Endothelial cell of umbilical vein (primary cell): ENCODE measurements at regions of chr3 and their contacts with region 1.

Region 1: GRCh38 chr3:170802164-170803151 is 67.5 kb downstream of the RPL22L1 start:
- DNase-seq: peak; percentile 92
- H3K4me3 ChIP-seq: no peak overlapping the region
- H3K27ac ChIP-seq: peak overlapping the region; percentile 76
- H3K4me1 ChIP-seq: peaks cover 36% of the 10 kb centered on the region
- H3K27me3 ChIP-seq: no peaks in the 10 kb centered on the region
- CTCF ChIP-seq: no peak
- POLR2A ChIP-seq: peak; percentile 28

Region 2: DNA sequence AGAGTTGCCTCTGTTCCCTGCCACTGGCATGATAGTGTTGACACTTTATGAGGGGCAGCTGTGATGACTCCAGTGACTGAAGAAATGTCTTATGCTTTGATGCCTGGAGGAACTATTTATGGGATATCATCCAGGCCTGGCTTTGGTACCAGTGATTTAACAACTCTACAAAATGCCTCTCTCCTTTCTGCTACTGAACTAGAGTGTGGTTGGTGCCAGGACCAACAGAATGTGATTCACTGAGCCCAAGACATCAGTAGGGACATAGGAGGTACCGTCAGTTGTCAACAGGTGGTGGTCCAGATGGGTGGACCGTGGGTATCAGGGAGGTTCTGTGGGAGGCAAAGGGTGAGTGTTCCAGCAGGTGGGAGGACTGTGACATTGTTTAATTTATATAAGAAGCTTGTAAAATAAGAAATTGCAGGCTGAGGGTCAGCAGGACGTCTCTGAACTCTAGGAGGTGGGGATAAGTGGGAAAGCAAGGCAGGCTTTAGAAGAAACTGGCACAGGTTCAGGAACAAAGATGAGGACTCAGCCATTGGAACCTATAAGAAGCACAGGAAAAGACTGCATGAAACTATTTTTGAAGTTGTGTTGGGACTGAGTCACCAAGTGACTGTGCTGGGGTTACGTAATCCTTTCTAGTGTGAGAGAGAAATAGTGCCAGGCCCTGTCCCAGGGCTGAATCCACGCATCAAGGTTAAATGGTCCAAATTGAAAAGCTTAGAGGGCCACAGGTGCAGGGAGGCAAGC is 188.1 kb before region 1 on chr3:
- CTCF ChIA-PET with region 1: no interaction called
- POLR2A ChIA-PET with region 1: no interaction called
- dilution Hi-C with region 1: no loop called
- intact Hi-C with region 1: loop called (anchors 5 kb)
- DNase-seq: peak; percentile 83
- H3K4me3 ChIP-seq: no peak overlapping the region
- H3K27ac ChIP-seq: no peak overlapping the region
- H3K4me1 ChIP-seq: peaks cover 7% of the 10 kb centered on the region
- H3K27me3 ChIP-seq: no peaks in the 10 kb centered on the region
- CTCF ChIP-seq: no peak
- POLR2A ChIP-seq: no peak

Region 3: GRCh38 chr3:170641510-170642236 is 160.8 kb before region 1 on chr3:
- CTCF ChIA-PET with region 1: no interaction called
- POLR2A ChIA-PET with region 1: no interaction called
- dilution Hi-C with region 1: no loop called
- intact Hi-C with region 1: no loop called
- DNase-seq: no peak
- H3K4me3 ChIP-seq: no peak overlapping the region
- H3K27ac ChIP-seq: no peak overlapping the region
- H3K4me1 ChIP-seq: no peaks in the 10 kb centered on the region
- H3K27me3 ChIP-seq: no peaks in the 10 kb centered on the region
- CTCF ChIP-seq: no peak
- POLR2A ChIP-seq: no peak

Region 4: DNA sequence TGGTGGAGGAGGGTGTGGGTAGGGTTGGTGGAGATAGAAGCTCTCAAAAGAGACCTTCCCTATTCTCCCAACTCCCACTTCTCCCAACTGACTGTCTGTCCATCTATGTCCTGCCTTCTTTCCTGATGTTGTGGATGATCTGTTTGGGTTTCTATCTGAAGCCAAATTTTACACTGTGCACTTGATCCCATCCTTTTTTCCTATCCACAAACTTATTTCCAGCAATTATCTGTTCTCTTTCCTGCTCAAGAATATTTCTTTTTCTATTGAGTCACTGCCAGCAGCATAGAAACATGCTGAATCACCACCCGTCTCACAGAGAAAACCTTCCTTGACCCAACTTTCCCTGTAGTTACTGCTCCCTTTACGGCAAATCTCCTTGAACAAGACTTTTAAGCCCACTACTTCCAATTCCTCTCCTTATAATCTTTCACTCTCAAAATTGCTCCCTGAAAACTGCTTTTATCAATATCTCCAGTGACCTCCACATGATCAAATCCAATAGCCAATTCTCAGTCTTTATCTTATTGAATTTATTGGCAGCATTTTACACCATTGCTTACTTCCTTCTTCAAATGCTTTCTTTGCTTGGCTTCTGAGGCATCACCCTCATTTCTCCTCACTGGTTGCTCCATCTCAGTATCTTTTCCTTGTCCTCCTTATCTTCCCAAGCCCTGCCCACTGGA is 75.3 kb before region 1 on chr3:
- CTCF ChIA-PET with region 1: no interaction called
- POLR2A ChIA-PET with region 1: no interaction called
- dilution Hi-C with region 1: no loop called
- intact Hi-C with region 1: loop called (anchors 2 kb)
- DNase-seq: peak; percentile 85
- H3K4me3 ChIP-seq: no peak overlapping the region
- H3K27ac ChIP-seq: peak overlapping the region; percentile 89
- H3K4me1 ChIP-seq: peaks cover 22% of the 10 kb centered on the region
- H3K27me3 ChIP-seq: no peaks in the 10 kb centered on the region
- CTCF ChIP-seq: no peak
- POLR2A ChIP-seq: no peak

Region 5: GRCh38 chr3:170745211-170745718 is 57.2 kb before region 1 on chr3:
- CTCF ChIA-PET with region 1: interaction called, 5 read pairs
- POLR2A ChIA-PET with region 1: no interaction called
- dilution Hi-C with region 1: no loop called
- intact Hi-C with region 1: loop called (anchors 1 kb)
- DNase-seq: peak; percentile 89
- H3K4me3 ChIP-seq: no peak overlapping the region
- H3K27ac ChIP-seq: peak overlapping the region; percentile 90
- H3K4me1 ChIP-seq: peaks cover 64% of the 10 kb centered on the region
- H3K27me3 ChIP-seq: no peaks in the 10 kb centered on the region
- CTCF ChIP-seq: no peak
- POLR2A ChIP-seq: peak; percentile 56

Region 6: DNA sequence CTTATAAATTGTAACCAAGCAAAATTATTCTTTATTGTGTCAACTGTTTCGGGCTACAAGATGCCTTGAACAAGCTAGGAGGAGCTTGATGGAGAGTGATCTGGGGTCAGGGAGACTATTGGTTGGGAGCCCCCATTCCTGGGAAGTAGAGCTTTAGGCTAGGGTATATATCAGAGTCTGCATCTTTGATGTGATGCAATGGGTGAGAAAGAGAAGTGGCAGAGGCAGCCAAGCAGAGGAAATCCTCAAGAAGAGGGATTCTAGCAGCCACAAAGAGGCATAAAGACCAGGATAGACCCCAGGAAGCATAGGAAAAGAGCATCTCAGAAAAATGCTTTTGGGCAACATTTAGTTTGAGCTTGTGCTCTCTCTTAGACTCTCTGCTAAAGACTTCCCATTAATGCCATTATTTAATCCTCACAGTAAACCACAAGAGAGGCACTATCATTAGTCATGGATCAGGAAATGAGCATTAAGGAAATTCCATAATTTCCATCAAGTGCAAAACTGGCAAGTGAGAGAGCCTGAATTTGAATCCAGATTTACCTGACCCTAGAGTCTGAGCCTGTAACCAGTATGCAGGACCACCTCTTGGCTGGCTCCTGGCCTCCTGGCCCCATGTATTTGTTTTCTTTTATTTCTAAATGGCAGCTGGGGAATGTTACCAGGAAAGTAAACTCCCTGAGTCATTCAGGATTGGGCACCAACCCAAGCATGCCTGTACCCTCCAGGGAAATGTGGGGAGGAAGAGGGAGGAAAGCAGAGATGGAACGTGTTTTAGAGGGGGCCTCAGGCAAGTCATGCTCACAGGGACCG is 51.2 kb before region 1 on chr3:
- CTCF ChIA-PET with region 1: interaction called, 7 read pairs
- POLR2A ChIA-PET with region 1: interaction called, 9 read pairs
- dilution Hi-C with region 1: no loop called
- intact Hi-C with region 1: loop called (anchors 1 kb)
- DNase-seq: peak; percentile 95
- H3K4me3 ChIP-seq: no peak overlapping the region
- H3K27ac ChIP-seq: peak overlapping the region; percentile 95
- H3K4me1 ChIP-seq: peaks cover 77% of the 10 kb centered on the region
- H3K27me3 ChIP-seq: no peaks in the 10 kb centered on the region
- CTCF ChIP-seq: no peak
- POLR2A ChIP-seq: no peak

Region 7: DNA sequence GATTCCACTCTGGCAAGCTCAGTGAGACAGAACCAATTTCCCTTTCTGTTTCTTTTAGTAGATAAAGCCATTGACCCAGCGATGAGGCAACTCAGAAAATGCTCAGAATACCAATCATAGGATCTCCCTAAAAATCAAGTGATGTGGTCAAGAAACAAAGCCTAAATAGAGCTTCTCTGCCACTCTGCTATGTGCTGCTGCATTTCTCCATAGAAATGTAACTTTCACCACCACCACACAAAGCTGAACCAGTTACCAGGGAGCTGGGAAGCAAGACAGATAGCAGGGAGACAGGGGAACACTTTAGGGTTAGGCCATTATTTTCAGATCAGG is 42.3 kb before region 1 on chr3:
- CTCF ChIA-PET with region 1: interaction called, 11 read pairs
- POLR2A ChIA-PET with region 1: interaction called, 4 read pairs
- dilution Hi-C with region 1: no loop called
- intact Hi-C with region 1: no loop called
- DNase-seq: no peak
- H3K4me3 ChIP-seq: no peak overlapping the region
- H3K27ac ChIP-seq: no peak overlapping the region
- H3K4me1 ChIP-seq: peaks cover 20% of the 10 kb centered on the region
- H3K27me3 ChIP-seq: no peaks in the 10 kb centered on the region
- CTCF ChIP-seq: no peak
- POLR2A ChIP-seq: no peak

Region 8: GRCh38 chr3:170835336-170835735 is 32.9 kb after region 1 on chr3:
- CTCF ChIA-PET with region 1: no interaction called
- POLR2A ChIA-PET with region 1: no interaction called
- dilution Hi-C with region 1: no loop called
- intact Hi-C with region 1: no loop called
- DNase-seq: no peak
- H3K4me3 ChIP-seq: no peak overlapping the region
- H3K27ac ChIP-seq: no peak overlapping the region
- H3K4me1 ChIP-seq: no peaks in the 10 kb centered on the region
- H3K27me3 ChIP-seq: peaks cover 22 to 23% of the 10 kb centered on the region in 2 experiments
- CTCF ChIP-seq: no peak
- POLR2A ChIP-seq: no peak

Region 9: DNA sequence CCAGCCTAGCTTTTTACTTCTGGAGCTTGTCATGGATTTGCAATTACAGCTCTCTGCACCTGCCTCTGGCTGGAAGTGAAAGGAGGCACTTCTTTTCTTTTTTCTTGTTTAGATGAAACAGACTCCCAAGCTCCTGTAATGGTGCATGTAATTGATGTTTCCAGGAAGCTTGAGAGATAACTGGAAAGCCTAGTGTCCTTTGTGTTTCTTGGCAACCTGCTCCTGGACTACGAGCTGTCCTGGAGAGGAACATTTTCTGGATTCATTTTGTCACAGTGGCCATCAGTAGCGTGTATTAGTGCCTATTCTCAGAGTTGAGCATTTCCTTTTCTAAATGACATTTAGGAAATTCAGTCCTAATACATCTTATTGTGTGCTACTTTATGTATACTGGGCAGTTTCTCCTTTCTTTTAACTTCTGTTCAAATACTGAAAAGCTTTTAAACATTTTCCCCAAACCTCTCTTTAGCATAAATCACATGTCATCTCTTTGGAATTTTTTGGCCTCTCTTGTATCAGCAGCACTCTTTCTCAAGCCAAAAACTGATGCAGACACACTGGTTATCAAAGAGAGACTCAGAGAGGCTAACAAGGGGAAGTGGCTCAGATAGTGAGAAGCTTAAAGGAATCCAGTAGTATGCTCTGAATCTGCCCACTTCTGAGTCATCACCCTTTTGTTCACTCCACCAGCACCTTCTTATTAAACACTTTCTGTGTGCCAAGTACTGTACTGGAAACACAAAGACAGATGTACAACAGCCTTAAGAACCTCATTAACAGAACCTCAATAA is 286.7 kb after region 1 on chr3:
- CTCF ChIA-PET with region 1: no interaction called
- POLR2A ChIA-PET with region 1: no interaction called
- dilution Hi-C with region 1: no loop called
- intact Hi-C with region 1: no loop called
- DNase-seq: peak; percentile 77
- H3K4me3 ChIP-seq: no peak overlapping the region
- H3K27ac ChIP-seq: peak overlapping the region; percentile 24
- H3K4me1 ChIP-seq: peaks cover 13% of the 10 kb centered on the region
- H3K27me3 ChIP-seq: no peaks in the 10 kb centered on the region
- CTCF ChIP-seq: no peak
- POLR2A ChIP-seq: no peak

Region 10: DNA sequence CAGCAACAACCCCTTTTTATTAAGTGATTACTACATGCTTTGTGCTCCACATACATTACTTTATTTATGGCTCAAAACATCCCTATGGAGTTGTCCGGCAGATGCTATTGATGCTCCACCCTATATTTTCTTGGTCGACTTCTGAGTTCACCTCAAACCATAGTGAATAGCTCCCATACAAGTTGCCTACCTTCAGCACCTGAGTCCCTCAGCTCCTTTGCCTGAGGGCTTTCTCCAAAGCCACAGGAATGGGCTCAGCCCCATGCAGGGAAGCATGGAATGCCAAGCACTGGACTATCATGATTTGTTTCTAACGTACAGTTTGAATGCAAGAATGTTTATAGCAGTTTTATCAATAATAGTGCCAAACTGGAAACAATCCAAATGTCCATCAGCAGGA is 782.6 kb after region 1 on chr3:
- CTCF ChIA-PET with region 1: no interaction called
- POLR2A ChIA-PET with region 1: no interaction called
- dilution Hi-C with region 1: no loop called
- intact Hi-C with region 1: no loop called
- DNase-seq: no peak
- H3K4me3 ChIP-seq: no peak overlapping the region
- H3K27ac ChIP-seq: no peak overlapping the region
- H3K4me1 ChIP-seq: no peaks in the 10 kb centered on the region
- H3K27me3 ChIP-seq: no peaks in the 10 kb centered on the region
- CTCF ChIP-seq: no peak
- POLR2A ChIP-seq: no peak